Colonic mucosa (tissue), 4 donors: ENCODE measurements at regions of chr14 and their contacts with region 1.

Region 1: GRCh38 chr14:90399541-90400444 is 3.0 kb downstream of the CALM1 start:
- DNase-seq: peak; percentile 92
- H3K4me3 ChIP-seq: peak overlapping the region; percentile 83
- H3K27ac ChIP-seq: peak overlapping the region; percentile 95
- H3K4me1 ChIP-seq: peaks cover 8% of the 10 kb centered on the region
- H3K27me3 ChIP-seq: no peaks in the 10 kb centered on the region
- CTCF ChIP-seq: peak; percentile 100

Region 2: DNA sequence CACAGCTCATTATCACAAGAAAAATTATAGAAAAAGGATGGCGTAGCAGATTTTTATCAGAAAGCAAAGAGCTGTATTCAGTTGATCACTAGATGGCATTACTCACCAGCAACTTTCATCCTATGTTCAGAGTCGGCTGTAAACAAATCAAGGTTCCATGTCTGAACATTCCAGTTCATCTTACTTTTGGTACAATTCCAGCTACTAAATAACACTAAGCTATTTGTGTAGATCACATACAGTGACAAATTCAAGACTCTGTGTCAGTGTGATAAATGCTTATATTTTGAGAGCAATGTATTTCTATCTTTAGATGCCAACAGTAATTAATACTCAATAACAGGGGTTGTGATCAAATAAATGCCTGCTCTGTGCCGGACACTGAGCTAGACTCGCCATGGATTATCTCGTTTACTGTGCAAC is 98.1 kb before region 1 on chr14:
- intact Hi-C with region 1: loop called (anchors 5 kb)
- DNase-seq: no peak
- H3K4me3 ChIP-seq: no peak overlapping the region
- H3K27ac ChIP-seq: no peak overlapping the region
- H3K4me1 ChIP-seq: no peaks in the 10 kb centered on the region
- H3K27me3 ChIP-seq: no peaks in the 10 kb centered on the region
- CTCF ChIP-seq: peak; percentile 33

Region 3: GRCh38 chr14:90383075-90383730 is 16.6 kb before region 1 on chr14:
- intact Hi-C with region 1: loop called (anchors 2 kb)
- DNase-seq: peak; percentile 99
- H3K4me3 ChIP-seq: peak overlapping the region; percentile 43
- H3K27ac ChIP-seq: peak overlapping the region; percentile 99
- H3K4me1 ChIP-seq: peaks cover 19% of the 10 kb centered on the region
- H3K27me3 ChIP-seq: no peaks in the 10 kb centered on the region
- CTCF ChIP-seq: no peak

Region 4: DNA sequence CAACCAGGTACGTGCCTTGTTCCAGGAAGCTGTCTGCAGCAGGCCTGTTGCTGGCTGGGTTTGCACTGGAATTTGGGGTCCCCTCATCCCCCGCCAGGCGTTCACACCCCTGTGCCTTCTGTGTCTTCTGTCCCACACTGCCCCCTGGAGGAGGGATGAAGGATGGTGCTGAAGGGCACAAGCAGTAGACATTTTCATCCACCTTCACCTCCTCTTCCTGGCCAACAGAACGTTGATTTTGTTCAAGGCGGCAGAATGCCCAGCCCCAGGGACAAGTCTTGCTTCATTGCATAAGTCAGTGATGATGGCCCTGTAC is 119.1 kb after region 1 on chr14:
- intact Hi-C with region 1: loop called (anchors 5 kb)
- DNase-seq: peak; percentile 70
- H3K4me3 ChIP-seq: no peak overlapping the region
- H3K27ac ChIP-seq: no peak overlapping the region
- H3K4me1 ChIP-seq: peaks cover 32% of the 10 kb centered on the region
- H3K27me3 ChIP-seq: no peaks in the 10 kb centered on the region
- CTCF ChIP-seq: peak; percentile 41

Region 5: DNA sequence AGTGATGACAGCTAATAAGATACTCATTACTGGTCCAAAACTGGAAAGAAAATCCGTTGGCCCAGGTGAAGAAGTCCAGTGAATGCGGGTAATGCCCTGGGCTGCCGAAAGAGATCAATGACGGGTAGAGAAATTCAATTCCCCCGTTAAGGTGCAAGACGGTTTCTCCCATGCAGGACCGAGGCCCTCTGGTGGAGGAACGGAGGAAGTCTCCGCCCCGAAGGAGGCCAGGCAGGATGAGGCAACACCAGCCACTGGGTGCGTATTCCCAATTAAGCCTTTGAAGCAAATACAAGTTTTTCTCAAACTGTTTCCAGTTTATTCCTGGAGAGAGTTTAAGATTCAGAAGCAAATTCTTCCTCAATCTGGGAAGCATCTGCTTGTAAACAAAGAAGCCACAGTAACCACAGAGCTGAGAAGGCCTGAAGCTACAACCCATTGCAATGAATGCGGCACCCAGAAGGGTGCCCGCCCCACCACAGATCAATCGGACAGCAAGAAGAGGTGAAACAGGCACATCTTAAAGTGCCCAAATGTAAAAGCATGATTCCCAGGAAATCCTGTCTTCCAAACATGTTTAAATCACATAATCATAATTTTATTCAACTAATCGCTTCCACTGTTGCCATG is 297.9 kb after region 1 on chr14:
- intact Hi-C with region 1: loop called (anchors 5 kb)
- DNase-seq: peak; percentile 83
- H3K4me3 ChIP-seq: no peak overlapping the region
- H3K27ac ChIP-seq: peak overlapping the region; percentile 38
- H3K4me1 ChIP-seq: peaks cover 4% of the 10 kb centered on the region
- H3K27me3 ChIP-seq: no peaks in the 10 kb centered on the region
- CTCF ChIP-seq: peak; percentile 98